ENCODE measurements at regions of chr22 and their contacts with region 1.

Region 1: DNA sequence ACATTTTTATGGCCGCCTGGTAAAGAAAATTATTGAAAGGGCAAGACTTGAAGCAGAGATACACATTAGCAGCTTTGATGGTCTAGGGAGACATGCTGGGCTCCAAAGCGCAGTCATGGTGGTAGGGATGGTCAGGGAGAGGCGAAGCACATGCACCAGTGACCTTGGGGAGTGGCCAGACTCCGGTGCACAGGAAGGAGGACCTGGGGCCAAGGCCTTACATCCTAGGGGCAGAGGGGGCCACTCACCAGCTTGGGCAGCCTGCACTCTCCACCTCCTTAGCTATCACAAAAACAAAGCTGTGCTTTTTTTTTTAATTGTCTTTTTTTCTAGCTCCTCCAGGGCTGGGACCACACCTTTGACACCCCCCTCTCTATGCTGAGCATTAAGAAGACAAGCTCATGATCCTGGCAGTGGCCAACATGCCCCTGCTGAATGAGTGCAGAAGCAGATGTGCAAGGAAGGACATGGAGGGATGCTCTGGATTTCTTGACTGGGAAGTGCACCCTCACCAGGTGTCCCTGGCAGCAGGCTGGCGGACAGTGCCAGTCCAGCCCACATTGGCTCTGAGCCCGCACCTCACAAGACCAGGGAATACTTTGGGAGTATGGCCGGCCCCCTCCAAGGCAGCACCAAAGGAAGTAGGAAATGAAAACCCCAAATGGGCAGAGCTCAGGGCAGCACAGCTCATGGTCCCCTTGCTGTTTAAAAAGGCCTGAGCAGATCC is 619.9 kb downstream of the TBC1D22A start:
- DNase-seq: peak; percentile 6 to 34
- H3K4me3 ChIP-seq: no peak overlapping the region
- H3K27ac ChIP-seq: no peak overlapping the region
- H3K4me1 ChIP-seq: no peaks in the 10 kb centered on the region
- H3K27me3 ChIP-seq: peaks cover 0 to 8% of the 10 kb centered on the region in 2 donors
- CTCF ChIP-seq: no peak

Region 2: DNA sequence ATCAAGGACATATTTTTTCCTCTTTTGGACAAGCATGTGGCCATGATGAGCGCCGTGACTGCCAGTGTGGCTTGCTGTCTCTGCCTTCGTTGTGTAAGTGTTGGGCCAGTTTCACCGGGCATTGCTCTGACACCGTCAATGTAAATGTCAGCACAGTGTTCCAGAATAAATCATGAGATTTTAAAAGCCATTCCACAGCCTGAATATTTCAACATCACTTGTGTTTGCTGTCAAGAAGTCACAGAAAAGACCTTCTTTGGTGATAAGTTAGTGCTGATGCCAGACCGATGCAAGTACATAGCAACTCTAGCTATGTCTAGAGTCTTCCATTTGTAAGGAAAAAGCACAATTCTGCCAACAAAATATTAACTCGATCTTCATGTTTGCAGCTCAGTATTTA is 152.1 kb before region 1 on chr22:
- intact Hi-C with region 1: no loop called
- DNase-seq: no peak
- H3K4me3 ChIP-seq: no peak overlapping the region
- H3K27ac ChIP-seq: no peak overlapping the region
- H3K4me1 ChIP-seq: no peaks in the 10 kb centered on the region
- H3K27me3 ChIP-seq: no peaks in the 10 kb centered on the region
- CTCF ChIP-seq: no peak

Region 3: DNA sequence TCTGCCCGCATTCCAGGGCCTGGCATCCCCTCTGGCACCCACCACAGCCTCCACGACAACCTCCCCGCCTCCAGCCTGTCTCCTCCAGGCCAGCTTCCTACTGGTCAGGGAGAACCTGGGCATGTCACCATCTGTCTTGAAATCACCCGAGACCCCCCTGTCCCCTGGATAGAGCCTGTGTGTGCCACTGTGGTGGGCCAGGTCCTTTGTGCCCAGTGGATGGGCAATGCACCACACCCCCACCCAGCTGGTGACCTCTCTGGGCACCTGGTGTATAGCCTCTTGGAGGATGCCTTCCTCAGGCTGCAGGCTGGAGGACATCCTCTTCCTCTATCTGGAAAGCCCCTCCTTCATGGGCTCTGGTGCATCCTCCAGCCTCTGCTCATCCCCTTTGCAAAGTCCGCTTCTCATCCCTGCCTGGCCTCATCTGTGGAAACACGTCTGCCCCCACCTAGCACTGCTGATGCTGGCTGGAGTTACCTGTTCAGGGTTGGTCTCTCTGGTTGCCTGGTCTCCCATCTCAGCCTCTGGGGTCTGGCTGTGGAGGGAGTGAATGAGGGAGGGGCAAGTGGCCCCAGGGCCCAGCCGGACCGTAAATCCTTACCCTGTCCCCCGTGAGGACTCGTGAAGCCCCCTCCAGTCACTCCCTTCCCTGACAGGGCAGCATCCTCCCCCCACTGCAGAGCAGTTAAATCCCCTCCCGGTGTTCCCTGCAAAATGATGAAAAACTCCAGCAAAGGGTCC is 30.3 kb before region 1 on chr22:
- intact Hi-C with region 1: loop called (anchors 2 kb)
- DNase-seq: no peak
- H3K4me3 ChIP-seq: no peak overlapping the region
- H3K27ac ChIP-seq: no peak overlapping the region
- H3K4me1 ChIP-seq: no peaks in the 10 kb centered on the region
- H3K27me3 ChIP-seq: peaks cover 0 to 7% of the 10 kb centered on the region in 2 donors
- CTCF ChIP-seq: no peak

Measured in tibial artery (tissue), 4 donors.